ENCODE measurements at regions of chr20 and their contacts with region 1.

Region 1: DNA sequence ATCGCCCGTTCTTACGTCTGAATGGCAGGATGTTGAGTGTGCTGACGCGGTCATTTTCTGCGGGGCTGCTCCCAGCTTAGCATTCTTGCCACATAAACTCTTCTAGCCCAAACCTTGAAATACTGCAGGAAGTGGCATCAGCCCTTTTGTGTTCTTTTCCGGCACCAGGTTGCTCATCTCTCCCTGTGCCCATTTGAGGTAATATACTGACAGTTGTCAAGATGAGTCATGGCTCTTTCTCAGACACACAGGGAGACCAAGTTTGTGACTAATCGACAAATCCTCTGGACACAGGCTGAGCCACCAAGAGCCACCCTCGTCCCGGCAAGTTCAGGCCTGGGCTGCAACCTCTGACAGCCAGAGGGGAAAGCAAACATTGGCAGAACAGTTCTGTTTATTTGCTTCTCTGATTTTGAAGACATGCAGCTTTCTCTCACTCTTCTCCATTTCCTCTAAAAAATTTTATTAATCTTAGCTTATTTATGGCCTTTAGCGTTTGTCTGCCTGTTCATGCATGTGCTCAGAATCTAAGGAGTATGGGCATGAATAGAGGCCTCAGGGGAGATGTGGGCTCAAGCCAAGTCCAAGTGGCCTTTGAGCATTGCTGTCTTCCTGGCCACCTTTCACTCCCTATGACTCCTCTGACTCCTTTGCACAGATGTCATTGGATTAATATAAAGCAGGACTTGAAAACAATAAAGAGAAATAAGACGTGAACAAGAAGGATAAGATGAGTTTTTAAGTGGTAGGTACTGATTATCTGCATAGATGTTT is 328.2 kb upstream of the JAG1 start:
- DNase-seq: peak; percentile 79 to 96
- H3K4me3 ChIP-seq: no peak overlapping the region
- H3K27ac ChIP-seq: peak overlapping the region; percentile 94
- H3K4me1 ChIP-seq: peaks cover 27% of the 10 kb centered on the region
- H3K27me3 ChIP-seq: no peaks in the 10 kb centered on the region
- CTCF ChIP-seq: no peak

Region 2: GRCh38 chr20:10558635-10559187 is 443.2 kb before region 1 on chr20:
- CTCF ChIA-PET with region 1: no interaction called
- POLR2A ChIA-PET with region 1: no interaction called
- intact Hi-C with region 1: loop called (anchors 5 kb)
- DNase-seq: peak; percentile 35 to 70
- H3K4me3 ChIP-seq: peak overlapping the region; percentile 8; the same call in 1 of the 2 replicates
- H3K27ac ChIP-seq: peak overlapping the region; percentile 87
- H3K4me1 ChIP-seq: peaks cover 48% of the 10 kb centered on the region
- H3K27me3 ChIP-seq: no peaks in the 10 kb centered on the region
- CTCF ChIP-seq: no peak

Region 3: GRCh38 chr20:10708351-10709185 is 293.4 kb before region 1 on chr20:
- CTCF ChIA-PET with region 1: no interaction called
- POLR2A ChIA-PET with region 1: no interaction called
- intact Hi-C with region 1: loop called (anchors 10 kb)
- DNase-seq: peak in 1 of 2 experiments; percentile 79
- H3K4me3 ChIP-seq: 0 out of 2 replicates have a peak overlapping the region, but pooled peaks have one; percentile 0
- H3K27ac ChIP-seq: peak overlapping the region; percentile 57
- H3K4me1 ChIP-seq: peaks cover 47% of the 10 kb centered on the region
- H3K27me3 ChIP-seq: no peaks in the 10 kb centered on the region
- CTCF ChIP-seq: no peak

Region 4: DNA sequence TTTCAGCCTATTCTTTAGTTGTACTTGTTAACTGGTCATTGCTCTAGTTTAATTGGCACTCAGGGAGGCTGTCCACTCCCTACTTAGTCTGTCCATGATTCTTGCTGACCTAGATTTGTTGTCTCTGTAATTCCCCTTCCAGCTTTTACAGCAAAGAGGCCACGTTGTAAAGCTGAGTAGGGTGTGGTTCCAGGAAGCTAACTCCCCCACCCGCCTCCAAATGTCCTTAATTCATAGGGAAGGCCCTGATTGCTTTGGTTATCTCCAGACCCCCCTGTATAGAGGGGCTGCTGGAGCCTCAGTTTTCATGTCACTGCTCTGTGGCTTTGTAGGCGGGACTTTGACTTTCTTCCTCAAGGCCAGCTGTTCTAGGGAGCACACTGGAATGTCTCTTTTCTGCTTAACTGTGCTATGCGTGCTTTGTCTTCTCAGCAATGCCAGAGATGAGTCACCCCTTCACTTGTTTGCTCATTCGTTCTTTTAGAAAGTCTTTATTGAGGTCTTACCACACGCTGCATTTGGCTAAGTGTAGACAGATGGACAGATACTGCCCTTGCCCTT is 153.1 kb before region 1 on chr20:
- CTCF ChIA-PET with region 1: no interaction called
- POLR2A ChIA-PET with region 1: no interaction called
- intact Hi-C with region 1: loop called (anchors 5 kb)
- DNase-seq: peak; percentile 49 to 71
- H3K4me3 ChIP-seq: no peak overlapping the region
- H3K27ac ChIP-seq: no peak overlapping the region
- H3K4me1 ChIP-seq: peaks cover 10% of the 10 kb centered on the region; the same call in 1 of the 2 replicates
- H3K27me3 ChIP-seq: no peaks in the 10 kb centered on the region
- CTCF ChIP-seq: no peak

Region 5: GRCh38 chr20:10990625-10991382 is 11.2 kb before region 1 on chr20:
- CTCF ChIA-PET with region 1: no interaction called
- POLR2A ChIA-PET with region 1: no interaction called
- intact Hi-C with region 1: no loop called
- DNase-seq: no peak
- H3K4me3 ChIP-seq: no peak overlapping the region
- H3K27ac ChIP-seq: no peak overlapping the region
- H3K4me1 ChIP-seq: no peaks in the 10 kb centered on the region
- H3K27me3 ChIP-seq: no peaks in the 10 kb centered on the region
- CTCF ChIP-seq: no peak

Region 6: DNA sequence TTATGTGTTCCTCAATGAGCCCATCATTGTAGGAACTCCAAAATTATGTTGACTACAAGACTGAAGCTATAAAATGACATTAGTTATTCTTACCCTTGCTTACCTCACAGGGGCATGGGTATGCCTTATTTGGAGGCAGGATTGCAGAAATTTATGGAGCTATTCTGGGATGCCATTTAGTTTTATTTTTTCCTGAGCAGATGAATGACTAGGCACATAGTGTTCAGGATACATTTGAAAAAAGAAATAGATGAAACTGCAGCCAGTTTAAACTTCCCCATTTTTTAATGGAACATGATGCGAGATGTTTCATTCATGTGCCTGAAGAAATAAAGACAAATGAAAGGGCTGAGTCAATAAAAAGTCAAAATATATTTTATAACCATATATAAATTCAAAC is 71.0 kb after region 1 on chr20:
- CTCF ChIA-PET with region 1: no interaction called
- POLR2A ChIA-PET with region 1: no interaction called
- intact Hi-C with region 1: no loop called
- DNase-seq: no peak
- H3K4me3 ChIP-seq: no peak overlapping the region
- H3K27ac ChIP-seq: no peak overlapping the region
- H3K4me1 ChIP-seq: no peaks in the 10 kb centered on the region
- H3K27me3 ChIP-seq: no peaks in the 10 kb centered on the region
- CTCF ChIP-seq: no peak

Region 7: GRCh38 chr20:11204926-11205768 is 203.2 kb after region 1 on chr20:
- CTCF ChIA-PET with region 1: no interaction called
- POLR2A ChIA-PET with region 1: no interaction called
- intact Hi-C with region 1: loop called (anchors 10 kb)
- DNase-seq: peak in 1 of 2 experiments; percentile 54
- H3K4me3 ChIP-seq: no peak overlapping the region
- H3K27ac ChIP-seq: no peak overlapping the region
- H3K4me1 ChIP-seq: peaks cover 7% of the 10 kb centered on the region; the same call in 1 of the 2 replicates
- H3K27me3 ChIP-seq: no peaks in the 10 kb centered on the region
- CTCF ChIP-seq: peak; percentile 68

Region 8: DNA sequence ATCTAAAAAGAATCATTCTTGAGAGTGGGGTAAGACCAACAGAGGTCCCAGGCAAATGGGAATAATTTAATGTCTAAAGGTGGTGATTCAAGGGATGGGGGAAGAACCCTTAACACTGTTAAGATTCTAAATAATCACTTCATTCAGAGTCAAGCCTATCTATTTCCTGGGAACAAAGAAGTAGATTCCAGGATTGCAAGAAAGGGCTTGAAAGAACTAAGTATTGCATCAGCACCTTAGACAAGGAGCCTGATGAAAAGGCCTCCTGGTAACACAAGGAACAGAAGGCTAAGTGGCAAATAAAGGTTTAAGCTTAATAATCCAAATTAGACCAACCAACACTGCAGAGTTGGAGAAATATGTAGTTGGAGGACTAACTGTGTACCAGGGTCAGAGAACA is 295.0 kb after region 1 on chr20:
- CTCF ChIA-PET with region 1: no interaction called
- POLR2A ChIA-PET with region 1: no interaction called
- intact Hi-C with region 1: no loop called
- DNase-seq: no peak
- H3K4me3 ChIP-seq: no peak overlapping the region
- H3K27ac ChIP-seq: no peak overlapping the region
- H3K4me1 ChIP-seq: no peaks in the 10 kb centered on the region
- H3K27me3 ChIP-seq: no peaks in the 10 kb centered on the region
- CTCF ChIP-seq: no peak